Mammary epithelial cell (primary cell): ENCODE measurements at regions of chr14 and their contacts with region 1.

Region 1: GRCh38 chr14:72665259-72665658 is 228.6 kb downstream of the DPF3 start:
- DNase-seq: peak; percentile 99
- H3K4me3 ChIP-seq: no peak overlapping the region
- H3K27ac ChIP-seq: peak overlapping the region; percentile 92
- H3K4me1 ChIP-seq: peaks cover 27% of the 10 kb centered on the region
- H3K27me3 ChIP-seq: no peaks in the 10 kb centered on the region
- CTCF ChIP-seq: no peak

Region 2: DNA sequence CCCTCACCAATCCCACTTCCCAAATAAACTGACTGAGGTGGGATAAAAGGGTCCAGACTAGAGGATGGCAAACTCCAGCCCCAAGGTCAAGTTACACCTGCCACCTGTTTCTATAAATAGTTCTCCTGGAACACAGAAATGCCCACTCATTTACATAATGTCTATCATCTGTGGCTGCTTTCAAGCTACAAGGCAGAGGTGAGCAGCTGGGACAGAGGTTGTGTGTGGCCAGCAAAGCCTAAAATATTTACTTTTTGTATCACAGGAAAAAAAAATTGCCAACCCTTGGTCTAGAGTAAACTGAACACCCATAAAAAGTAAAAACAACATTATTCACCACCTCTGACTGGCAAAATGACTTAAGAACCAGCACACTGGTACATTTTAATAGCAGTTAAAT is 463.6 kb before region 1 on chr14:
- CTCF ChIA-PET with region 1: no interaction called
- dilution Hi-C with region 1: no loop called
- in situ Hi-C with region 1: no loop called
- intact Hi-C with region 1: no loop called
- DNase-seq: no peak
- H3K4me3 ChIP-seq: no peak overlapping the region
- H3K27ac ChIP-seq: no peak overlapping the region
- H3K4me1 ChIP-seq: no peaks in the 10 kb centered on the region
- H3K27me3 ChIP-seq: no peaks in the 10 kb centered on the region
- CTCF ChIP-seq: no peak

Region 3: DNA sequence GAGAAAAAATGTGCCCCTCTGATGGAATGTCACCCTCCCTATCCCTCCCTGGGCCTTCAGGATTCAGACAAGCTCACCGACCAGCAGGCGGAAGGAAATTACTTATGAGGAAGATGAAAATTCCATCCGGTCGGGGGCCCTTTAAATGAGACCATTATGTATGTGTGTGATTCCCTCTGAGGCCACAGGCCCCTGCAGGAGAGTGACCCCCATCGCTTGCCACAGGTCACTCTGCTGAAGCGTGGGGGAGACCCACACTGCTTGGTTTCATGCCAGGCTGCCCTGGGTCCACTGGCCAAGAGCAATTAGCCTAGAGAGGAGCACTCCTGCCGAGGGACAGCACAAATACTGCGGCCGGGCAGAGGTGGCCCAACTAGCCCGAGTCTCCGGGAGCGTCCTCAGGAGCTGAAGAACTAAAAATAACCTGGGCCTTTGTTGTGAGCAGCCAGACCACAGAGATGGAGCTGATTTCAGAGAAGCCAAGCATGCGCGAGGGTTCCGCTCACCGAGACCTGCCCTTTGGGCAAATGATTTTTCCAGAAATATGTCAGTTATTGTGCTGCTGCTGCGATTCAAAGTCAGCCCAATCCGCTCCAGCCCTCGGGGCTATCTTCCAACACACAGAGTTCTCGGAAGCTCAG is 47.7 kb before region 1 on chr14:
- CTCF ChIA-PET with region 1: no interaction called
- dilution Hi-C with region 1: no loop called
- in situ Hi-C with region 1: no loop called
- intact Hi-C with region 1: loop called (anchors 5 kb)
- DNase-seq: peak; percentile 32
- H3K4me3 ChIP-seq: no peak overlapping the region
- H3K27ac ChIP-seq: peak overlapping the region; percentile 27
- H3K4me1 ChIP-seq: peaks cover 48% of the 10 kb centered on the region
- H3K27me3 ChIP-seq: no peaks in the 10 kb centered on the region
- CTCF ChIP-seq: no peak

Region 4: GRCh38 chr14:72643317-72643801 is 21.9 kb before region 1 on chr14:
- CTCF ChIA-PET with region 1: no interaction called
- dilution Hi-C with region 1: no loop called
- in situ Hi-C with region 1: no loop called
- intact Hi-C with region 1: loop called (anchors 1 kb)
- DNase-seq: peak; percentile 96
- H3K4me3 ChIP-seq: no peak overlapping the region
- H3K27ac ChIP-seq: peak overlapping the region; percentile 76
- H3K4me1 ChIP-seq: peaks cover 21% of the 10 kb centered on the region
- H3K27me3 ChIP-seq: no peaks in the 10 kb centered on the region
- CTCF ChIP-seq: no peak

Region 5: GRCh38 chr14:72755766-72756165 is 90.5 kb after region 1 on chr14:
- CTCF ChIA-PET with region 1: no interaction called
- dilution Hi-C with region 1: no loop called
- in situ Hi-C with region 1: no loop called
- intact Hi-C with region 1: no loop called
- DNase-seq: no peak
- H3K4me3 ChIP-seq: no peak overlapping the region
- H3K27ac ChIP-seq: no peak overlapping the region
- H3K4me1 ChIP-seq: no peaks in the 10 kb centered on the region
- H3K27me3 ChIP-seq: no peaks in the 10 kb centered on the region
- CTCF ChIP-seq: no peak

Region 6: GRCh38 chr14:72893636-72894321 is 228.5 kb after region 1 on chr14 and contains the start of gene DPF3:
- CTCF ChIA-PET with region 1: no interaction called
- dilution Hi-C with region 1: no loop called
- in situ Hi-C with region 1: no loop called
- intact Hi-C with region 1: loop called (anchors 5 kb)
- DNase-seq: peak; percentile 95
- H3K4me3 ChIP-seq: peak within 1 kb of the TSS; percentile 68 to 99 (median 94)
- H3K27ac ChIP-seq: no peak within 1 kb of the TSS
- H3K4me1 ChIP-seq: peaks cover 19% of the 10 kb centered on the region
- H3K27me3 ChIP-seq: no peaks in the 10 kb centered on the region
- CTCF ChIP-seq: no peak
- total RNA-seq, gene DPF3: 1.8 to 1.9 TPM